PC-3 (cell line): ENCODE measurements at regions of chr5 and their contacts with region 1.

Region 1: DNA sequence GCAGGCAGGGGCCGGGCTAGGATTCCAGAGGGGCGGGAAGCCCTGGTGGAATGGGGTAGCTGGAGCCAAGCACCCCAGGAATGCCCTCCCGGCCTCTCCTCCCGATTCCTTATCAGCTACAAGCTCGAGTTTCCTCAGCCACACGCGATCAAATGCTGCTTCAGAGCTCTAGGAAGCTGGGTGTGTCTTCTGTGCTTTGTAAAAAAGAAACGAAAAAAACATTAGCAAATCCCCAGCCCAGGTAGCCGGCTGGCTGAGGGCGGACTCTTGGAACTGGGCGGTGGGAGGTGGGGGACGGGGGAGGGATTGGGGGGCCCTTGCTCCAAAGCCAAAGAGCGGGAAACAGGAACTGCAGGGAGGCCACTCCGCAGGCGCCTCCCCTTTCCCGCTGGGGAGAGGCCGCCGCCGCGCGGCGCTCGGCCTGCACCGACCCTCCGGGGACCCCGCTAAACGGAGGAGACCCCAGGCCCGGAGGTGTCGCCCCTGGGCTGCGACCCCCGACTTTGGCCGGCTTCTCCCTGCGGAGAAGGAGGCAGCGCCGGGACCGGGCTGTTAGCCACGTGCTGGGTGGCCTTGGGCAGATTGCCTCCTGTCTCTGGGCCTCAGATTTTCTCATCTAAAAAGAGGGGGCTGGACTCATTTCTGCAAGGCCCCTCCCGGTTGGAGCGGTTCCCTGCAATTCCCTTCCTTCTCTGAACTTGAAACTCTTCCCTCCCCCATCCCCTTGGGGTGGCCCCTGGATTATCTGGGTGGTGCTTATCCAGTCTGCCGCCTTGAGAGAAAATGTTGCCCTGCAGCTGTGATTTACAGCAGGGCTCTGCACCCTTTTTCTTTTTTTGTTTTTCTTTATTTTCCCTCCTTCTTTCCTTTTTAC is 40.9 kb upstream of the FABP6 start:
- DNase-seq: peak; percentile 39
- ATAC-seq: peak; percentile 63
- H3K4me3 ChIP-seq: peak overlapping the region; percentile 44
- H3K27ac ChIP-seq: no peak overlapping the region
- H3K4me1 ChIP-seq: peaks cover 4% of the 10 kb centered on the region; the same call in 1 of the 2 replicates
- H3K27me3 ChIP-seq: no peaks in the 10 kb centered on the region
- CTCF ChIP-seq: no peak

Region 2: GRCh38 chr5:161507591-161507990 is 1319.2 kb after region 1 on chr5:
- CTCF ChIA-PET with region 1: no interaction called
- POLR2A ChIA-PET with region 1: interaction called, 11 read pairs
- intact Hi-C with region 1: no loop called
- DNase-seq: no peak
- ATAC-seq: no peak
- H3K4me3 ChIP-seq: no peak overlapping the region
- H3K27ac ChIP-seq: no peak overlapping the region
- H3K4me1 ChIP-seq: no peaks in the 10 kb centered on the region
- H3K27me3 ChIP-seq: no peaks in the 10 kb centered on the region
- CTCF ChIP-seq: no peak